Activated CD8-positive, alpha-beta T cell treated with anti-CD3 and anti-CD28 coated beads, Interleukin-2, amount 10 ng/mL, durations not matched to agents 7 days and 5 days (primary cell): ENCODE measurements at regions of chr6 and their contacts with region 1.

Region 1: DNA sequence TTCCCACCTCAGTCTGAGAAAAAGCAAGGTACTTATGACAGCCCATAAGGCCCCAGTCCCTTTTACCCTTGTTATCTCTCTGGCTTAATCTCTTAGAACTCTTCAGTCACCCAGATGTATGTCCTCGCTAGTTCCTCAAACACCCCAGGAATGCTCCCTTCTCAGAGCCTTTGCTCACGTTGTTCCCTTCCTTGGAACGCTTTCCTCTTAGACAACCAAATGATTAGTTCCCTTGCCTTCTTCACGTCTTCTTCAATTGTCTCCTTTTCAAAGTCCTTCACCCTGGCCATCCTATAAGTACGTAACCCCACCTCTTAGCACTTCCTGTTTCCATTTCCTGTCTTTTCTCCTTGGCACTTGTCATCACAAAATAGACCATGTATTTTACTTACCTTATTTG is 1.1 kb upstream of the APOBEC2 start:
- DNase-seq: no peak
- ATAC-seq: peak; percentile 75
- H3K4me3 Mint-ChIP-seq: no peak overlapping the region
- H3K27ac Mint-ChIP-seq: peak overlapping the region; percentile 89
- H3K4me1 Mint-ChIP-seq: peaks cover 21% of the 10 kb centered on the region
- H3K27me3 Mint-ChIP-seq: no peaks in the 10 kb centered on the region

Region 2: GRCh38 chr6:41066867-41067304 is 15.0 kb after region 1 on chr6:
- CTCF ChIA-PET with region 1: interaction called, 25 read pairs
- POLR2A ChIA-PET with region 1: interaction called, 5 read pairs
- DNase-seq: peak; percentile 81
- ATAC-seq: no peak
- H3K4me3 Mint-ChIP-seq: no peak overlapping the region
- H3K27ac Mint-ChIP-seq: no peak overlapping the region
- H3K4me1 Mint-ChIP-seq: peaks cover 37% of the 10 kb centered on the region
- H3K27me3 Mint-ChIP-seq: no peaks in the 10 kb centered on the region

Region 3: GRCh38 chr6:41122373-41122772 is 70.5 kb after region 1 on chr6:
- CTCF ChIA-PET with region 1: no interaction called
- POLR2A ChIA-PET with region 1: no interaction called
- DNase-seq: no peak
- ATAC-seq: no peak
- H3K4me3 Mint-ChIP-seq: no peak overlapping the region
- H3K27ac Mint-ChIP-seq: no peak overlapping the region
- H3K4me1 Mint-ChIP-seq: no peaks in the 10 kb centered on the region
- H3K27me3 Mint-ChIP-seq: no peaks in the 10 kb centered on the region